H1 (cell line): ENCODE measurements at regions of chr2 and their contacts with region 1.

Region 1: DNA sequence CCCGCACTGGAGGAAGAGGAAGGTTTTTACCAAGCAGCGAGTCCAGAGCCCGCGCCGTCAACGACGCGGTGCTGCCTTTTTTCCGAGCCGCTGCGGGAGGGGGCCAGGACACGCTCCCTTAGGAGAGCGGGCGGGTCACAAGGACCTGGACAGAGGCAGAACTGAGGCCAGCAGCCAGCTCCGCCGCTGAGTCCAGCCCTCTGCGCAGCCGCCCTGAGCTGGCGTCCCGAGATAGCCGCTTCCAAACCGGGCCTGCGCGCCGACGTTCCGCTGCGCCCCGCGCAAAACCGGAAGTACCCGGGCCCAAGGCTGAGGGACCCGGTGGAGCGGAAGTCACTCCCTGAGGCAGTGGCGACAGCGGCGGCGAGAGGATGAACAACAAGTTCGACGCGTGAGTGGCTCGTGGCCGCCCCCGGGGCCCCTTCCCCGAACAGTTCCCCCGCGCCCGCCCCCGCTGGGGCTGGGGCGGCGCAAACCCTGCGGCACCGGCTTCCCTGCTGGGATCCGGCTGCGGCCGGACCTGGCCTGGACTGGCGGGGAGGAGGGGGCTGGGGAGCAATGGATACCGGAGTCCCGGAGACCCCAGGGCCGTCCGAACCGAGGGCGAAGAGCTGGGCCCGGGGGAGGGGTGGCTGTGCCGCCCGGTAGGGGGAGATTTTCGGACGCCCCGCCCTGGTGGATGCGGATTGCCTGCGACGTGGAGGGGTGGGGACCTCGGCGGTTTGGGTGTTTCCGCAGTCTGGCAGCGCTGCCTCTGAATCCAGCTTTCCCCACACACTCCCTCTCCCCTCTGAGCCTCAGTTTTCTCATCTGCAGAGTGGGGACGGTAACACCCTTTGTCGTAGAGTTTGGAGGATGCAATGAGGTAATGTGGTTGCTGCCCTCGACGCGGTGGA is at the starts of genes EIF4E2 and TIGD1:
- DNase-seq: peak; percentile 78 to 94
- H3K4me3 ChIP-seq: peak within 1 kb of the TSS; percentile 81 to 94 (median 90)
- H3K27ac ChIP-seq: peak within 1 kb of the TSS; percentile 88
- H3K4me1 ChIP-seq: peaks cover 0 to 6% (median 5%) of the 10 kb centered on the region in 4 experiments; a peak in 6 of 7 replicates
- H3K27me3 ChIP-seq: no peaks in the 10 kb centered on the region
- CTCF ChIP-seq: peak; percentile 18 to 43 (median 39); a peak in 3 of 4 replicates
- EP300 ChIP-seq: no peak; a peak in 1 of 3 replicates
- POLR2A ChIP-seq: peak; percentile 89 to 98
- RAD21 ChIP-seq: no peak
- total RNA-seq, gene EIF4E2: 114 and 116 TPM in 2 replicates
- total RNA-seq, gene TIGD1: 7.9 and 8.3 TPM in 2 replicates

Region 2: GRCh38 chr2:232537079-232537478 is 13.5 kb before region 1 on chr2:
- CTCF ChIA-PET with region 1: interaction called, 23 read pairs
- POLR2A ChIA-PET with region 1: interaction called, 24 read pairs
- DNase-seq: peak in 1 of 2 experiments; percentile 80
- H3K4me3 ChIP-seq: no peak overlapping the region
- H3K27ac ChIP-seq: no peak overlapping the region
- H3K4me1 ChIP-seq: peaks cover 0 to 18% (median 11%) of the 10 kb centered on the region in 4 experiments; a peak in 6 of 7 replicates
- H3K27me3 ChIP-seq: no peaks in the 10 kb centered on the region
- CTCF ChIP-seq: peak in 2 of 3 experiments; percentile 97 to 99; a peak in 3 of 4 replicates
- EP300 ChIP-seq: no peak
- POLR2A ChIP-seq: no peak
- RAD21 ChIP-seq: peak; percentile 50 to 68

Region 3: DNA sequence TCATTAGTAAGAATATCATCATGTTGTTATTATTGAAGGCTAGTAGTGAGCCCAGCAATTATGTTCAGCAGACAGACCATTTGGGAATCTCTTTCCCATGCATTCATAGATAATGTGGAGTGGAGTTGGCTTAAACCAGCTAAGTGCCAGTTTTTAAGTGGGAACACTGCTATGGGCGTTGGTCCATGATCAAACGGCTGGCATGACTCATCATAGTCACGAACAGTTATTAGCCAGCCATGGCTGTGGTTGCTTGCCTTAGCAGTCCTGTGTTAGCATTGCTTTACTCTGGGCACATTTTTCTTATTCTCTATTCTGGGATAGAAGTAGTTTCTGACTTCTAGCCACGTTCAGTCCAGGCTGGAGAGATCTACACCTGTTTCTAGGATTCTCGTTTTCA is 17.6 kb after region 1 on chr2:
- CTCF ChIA-PET with region 1: interaction called, 4 read pairs
- POLR2A ChIA-PET with region 1: interaction called, 20 read pairs
- DNase-seq: no peak
- H3K4me3 ChIP-seq: no peak overlapping the region
- H3K27ac ChIP-seq: no peak overlapping the region
- H3K4me1 ChIP-seq: no peaks in the 10 kb centered on the region
- H3K27me3 ChIP-seq: no peaks in the 10 kb centered on the region
- CTCF ChIP-seq: no peak
- EP300 ChIP-seq: no peak
- POLR2A ChIP-seq: no peak
- RAD21 ChIP-seq: no peak

Region 4: DNA sequence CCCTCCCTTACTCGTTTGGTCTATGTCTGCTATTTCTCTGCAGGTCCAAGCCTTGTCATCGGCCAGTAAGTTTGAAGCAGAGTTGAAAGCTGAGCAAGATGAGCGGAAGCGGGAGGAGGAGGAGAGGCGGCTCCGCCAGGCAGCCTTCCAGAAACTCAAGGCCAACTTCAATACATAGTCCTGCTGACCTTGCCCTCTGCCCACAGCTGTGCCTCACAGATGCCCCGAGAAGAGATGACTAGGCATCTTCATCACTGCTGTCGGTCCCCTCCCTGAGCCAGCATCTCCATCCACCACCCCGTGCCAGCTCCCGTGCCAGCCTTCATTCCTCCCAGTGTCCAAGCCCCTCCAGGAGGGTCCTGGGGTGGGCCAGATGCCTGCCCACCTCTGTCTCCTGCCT is 130.9 kb after region 1 on chr2:
- CTCF ChIA-PET with region 1: no interaction called
- POLR2A ChIA-PET with region 1: no interaction called
- DNase-seq: no peak
- H3K4me3 ChIP-seq: no peak overlapping the region
- H3K27ac ChIP-seq: no peak overlapping the region
- H3K4me1 ChIP-seq: no peaks in the 10 kb centered on the region
- H3K27me3 ChIP-seq: no peaks in the 10 kb centered on the region
- CTCF ChIP-seq: no peak
- EP300 ChIP-seq: no peak
- POLR2A ChIP-seq: no peak
- RAD21 ChIP-seq: no peak